ENCODE measurements at regions of chr11 and their contacts with region 1.

Region 1: GRCh38 chr11:118051611-118052461 is 25.0 kb upstream of the TMPRSS4 start:
- DNase-seq: no peak
- ATAC-seq: no peak
- H3K4me3 ChIP-seq: no peak overlapping the region
- H3K27ac ChIP-seq: no peak overlapping the region
- H3K4me1 ChIP-seq: no peaks in the 10 kb centered on the region
- H3K27me3 ChIP-seq: peaks cover 84% of the 10 kb centered on the region
- CTCF ChIP-seq: no peak

Region 2: GRCh38 chr11:117807482-117808327 is 244.1 kb before region 1 on chr11:
- CTCF ChIA-PET with region 1: interaction called, 6 read pairs
- POLR2A ChIA-PET with region 1: no interaction called
- intact Hi-C with region 1: loop called (anchors 1 kb)
- DNase-seq: peak; percentile 81
- ATAC-seq: peak; percentile 73
- H3K4me3 ChIP-seq: no peak overlapping the region
- H3K27ac ChIP-seq: no peak overlapping the region
- H3K4me1 ChIP-seq: no peaks in the 10 kb centered on the region
- H3K27me3 ChIP-seq: peaks cover 55% of the 10 kb centered on the region
- CTCF ChIP-seq: peak; percentile 94

Region 3: GRCh38 chr11:117843666-117844484 is 208.0 kb before region 1 on chr11:
- CTCF ChIA-PET with region 1: no interaction called
- POLR2A ChIA-PET with region 1: no interaction called
- intact Hi-C with region 1: loop called (anchors 1 kb)
- DNase-seq: peak; percentile 82
- ATAC-seq: peak; percentile 89
- H3K4me3 ChIP-seq: no peak overlapping the region
- H3K27ac ChIP-seq: no peak overlapping the region
- H3K4me1 ChIP-seq: no peaks in the 10 kb centered on the region
- H3K27me3 ChIP-seq: peaks cover 66% of the 10 kb centered on the region
- CTCF ChIP-seq: peak; percentile 97